Heart right ventricle (tissue), 16 donors: ENCODE measurements at regions of chr12 and their contacts with region 1.

Region 1: GRCh38 chr12:77299910-77300669 is 234.7 kb upstream of the E2F7 start:
- DNase-seq: no peak
- ATAC-seq: no peak
- H3K4me3 ChIP-seq: no peak overlapping the region
- H3K27ac ChIP-seq: no peak overlapping the region
- H3K4me1 ChIP-seq: no peaks in the 10 kb centered on the region
- H3K27me3 ChIP-seq: no peaks in the 10 kb centered on the region
- CTCF ChIP-seq: no peak

Region 2: GRCh38 chr12:77152623-77153193 is 147.4 kb before region 1 on chr12:
- intact Hi-C with region 1: loop called in 1 of 10 experiments (anchors 10 kb)
- DNase-seq: no peak
- ATAC-seq: peak in 2 of 8 donors; percentile 47 to 75
- H3K4me3 ChIP-seq: no peak overlapping the region
- H3K27ac ChIP-seq: no peak overlapping the region
- H3K4me1 ChIP-seq: no peaks in the 10 kb centered on the region
- H3K27me3 ChIP-seq: no peaks in the 10 kb centered on the region
- CTCF ChIP-seq: peak; percentile 27 to 73 (median 63)

Region 3: DNA sequence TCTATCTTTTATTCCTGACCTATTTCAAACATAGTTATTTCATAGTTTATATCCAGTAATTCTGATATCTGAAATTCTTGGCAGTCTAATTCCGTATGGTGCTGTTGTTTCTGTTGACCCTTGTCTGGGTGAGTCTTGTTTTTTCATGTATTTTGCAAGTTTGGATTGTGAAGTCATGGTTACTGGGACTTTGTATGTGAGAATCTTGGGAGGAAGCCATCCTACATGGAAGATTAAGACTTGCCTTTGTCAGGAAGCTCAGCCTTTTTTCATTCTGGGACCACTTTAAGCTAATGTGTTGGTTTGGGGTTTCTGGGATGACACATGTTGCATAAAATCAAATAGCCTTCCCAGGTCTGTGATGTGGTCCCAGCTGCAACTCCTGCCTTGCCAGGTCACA is 43.1 kb before region 1 on chr12:
- intact Hi-C with region 1: no loop called
- DNase-seq: no peak
- ATAC-seq: peak in 4 of 8 donors; percentile 17 to 67 (median 50)
- H3K4me3 ChIP-seq: no peak overlapping the region
- H3K27ac ChIP-seq: no peak overlapping the region
- H3K4me1 ChIP-seq: no peaks in the 10 kb centered on the region
- H3K27me3 ChIP-seq: no peaks in the 10 kb centered on the region
- CTCF ChIP-seq: no peak